PC-9 (cell line): ENCODE measurements at regions of chr7 and their contacts with region 1.

Region 1: GRCh38 chr7:94449148-94449725 is 54.5 kb downstream of the COL1A2 start:
- DNase-seq: peak in 1 of 2 experiments; percentile 37
- H3K4me3 ChIP-seq: no peak overlapping the region
- H3K27ac ChIP-seq: no peak overlapping the region
- H3K4me1 ChIP-seq: peaks cover 5% of the 10 kb centered on the region; the same call in 1 of the 2 replicates
- H3K27me3 ChIP-seq: no peaks in the 10 kb centered on the region
- CTCF ChIP-seq: peak; percentile 84

Region 2: GRCh38 chr7:94620703-94621118 is 171.5 kb after region 1 on chr7:
- CTCF ChIA-PET with region 1: no interaction called
- POLR2A ChIA-PET with region 1: interaction called, 32 read pairs
- intact Hi-C with region 1: no loop called
- DNase-seq: peak; percentile 83 to 89
- H3K4me3 ChIP-seq: no peak overlapping the region
- H3K27ac ChIP-seq: no peak overlapping the region
- H3K4me1 ChIP-seq: peaks cover 18% of the 10 kb centered on the region
- H3K27me3 ChIP-seq: no peaks in the 10 kb centered on the region
- CTCF ChIP-seq: no peak

Region 3: GRCh38 chr7:94907026-94907810 is 458.0 kb after region 1 on chr7 and contains the start of gene PPP1R9A:
- CTCF ChIA-PET with region 1: no interaction called
- POLR2A ChIA-PET with region 1: no interaction called
- intact Hi-C with region 1: loop called (anchors 2 kb)
- DNase-seq: peak in 1 of 2 experiments; percentile 62
- H3K4me3 ChIP-seq: peak within 1 kb of the TSS; percentile 72
- H3K27ac ChIP-seq: no peak within 1 kb of the TSS
- H3K4me1 ChIP-seq: peaks cover 11% of the 10 kb centered on the region; the same call in 1 of the 2 replicates
- H3K27me3 ChIP-seq: no peaks in the 10 kb centered on the region
- CTCF ChIP-seq: no peak; the same call in 1 of the 2 replicates
- total RNA-seq, gene PPP1R9A: 11.5 and 11.9 TPM in 2 replicates

Region 4: DNA sequence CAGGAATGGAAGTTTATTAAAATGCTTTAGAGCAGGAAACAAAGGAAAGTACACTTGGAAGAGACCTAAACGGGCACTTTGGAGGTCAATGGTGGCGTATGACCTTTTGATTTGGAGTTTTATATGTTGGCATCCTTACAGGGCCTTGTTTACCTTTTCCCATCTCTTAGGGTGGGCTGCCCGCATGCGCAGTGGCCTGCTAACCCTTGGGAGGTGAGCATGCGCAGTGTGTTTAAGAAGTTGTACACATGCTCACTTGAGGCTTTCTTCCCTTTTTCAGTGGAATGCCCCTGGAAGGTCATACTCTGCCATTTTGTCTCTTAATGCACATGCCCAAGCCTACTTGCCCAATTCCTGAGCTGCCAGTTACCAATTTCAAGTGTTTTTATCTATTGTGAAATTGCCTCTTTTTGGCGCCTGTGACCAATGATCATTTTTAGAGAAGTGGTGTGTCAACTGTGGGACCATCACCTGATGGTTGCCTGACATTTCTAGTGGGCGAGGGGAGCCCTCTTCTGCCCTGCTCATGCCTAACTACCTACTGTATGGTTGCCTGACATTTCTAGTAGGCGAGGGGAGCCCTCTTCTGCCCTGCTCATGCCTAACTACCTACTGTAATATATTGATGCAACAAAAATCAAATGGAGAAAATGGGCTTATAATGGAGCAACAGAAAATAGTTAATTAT is 596.1 kb after region 1 on chr7:
- CTCF ChIA-PET with region 1: interaction called, 5 read pairs
- POLR2A ChIA-PET with region 1: no interaction called
- intact Hi-C with region 1: loop called (anchors 2 kb)
- DNase-seq: peak in 1 of 2 experiments; percentile 25
- H3K4me3 ChIP-seq: no peak overlapping the region
- H3K27ac ChIP-seq: no peak overlapping the region
- H3K4me1 ChIP-seq: no peaks in the 10 kb centered on the region
- H3K27me3 ChIP-seq: no peaks in the 10 kb centered on the region
- CTCF ChIP-seq: no peak; the same call in 1 of the 2 replicates

Region 5: GRCh38 chr7:95246831-95247370 is 797.7 kb after region 1 on chr7:
- CTCF ChIA-PET with region 1: interaction called, 5 read pairs
- POLR2A ChIA-PET with region 1: no interaction called
- intact Hi-C with region 1: loop called (anchors 2 kb)
- DNase-seq: peak; percentile 47 to 48
- H3K4me3 ChIP-seq: no peak overlapping the region
- H3K27ac ChIP-seq: no peak overlapping the region
- H3K4me1 ChIP-seq: no peaks in the 10 kb centered on the region
- H3K27me3 ChIP-seq: no peaks in the 10 kb centered on the region
- CTCF ChIP-seq: peak; percentile 83